ENCODE measurements at regions of chr22 and their contacts with region 1.

Region 1: GRCh38 chr22:36286471-36287224 is 33.7 kb downstream of the APOL1 start:
- DNase-seq: peak; percentile 94
- H3K4me3 ChIP-seq: no peak overlapping the region
- H3K27ac ChIP-seq: peak overlapping the region in 1 of 2 experiments; percentile 29; a peak in 2 of 4 replicates
- H3K4me1 ChIP-seq: no peaks in the 10 kb centered on the region; a peak in 1 of 4 replicates
- H3K27me3 ChIP-seq: no peaks in the 10 kb centered on the region
- CTCF ChIP-seq: peak; percentile 90
- EP300 ChIP-seq: no peak
- RAD21 ChIP-seq: peak; percentile 82

Region 2: DNA sequence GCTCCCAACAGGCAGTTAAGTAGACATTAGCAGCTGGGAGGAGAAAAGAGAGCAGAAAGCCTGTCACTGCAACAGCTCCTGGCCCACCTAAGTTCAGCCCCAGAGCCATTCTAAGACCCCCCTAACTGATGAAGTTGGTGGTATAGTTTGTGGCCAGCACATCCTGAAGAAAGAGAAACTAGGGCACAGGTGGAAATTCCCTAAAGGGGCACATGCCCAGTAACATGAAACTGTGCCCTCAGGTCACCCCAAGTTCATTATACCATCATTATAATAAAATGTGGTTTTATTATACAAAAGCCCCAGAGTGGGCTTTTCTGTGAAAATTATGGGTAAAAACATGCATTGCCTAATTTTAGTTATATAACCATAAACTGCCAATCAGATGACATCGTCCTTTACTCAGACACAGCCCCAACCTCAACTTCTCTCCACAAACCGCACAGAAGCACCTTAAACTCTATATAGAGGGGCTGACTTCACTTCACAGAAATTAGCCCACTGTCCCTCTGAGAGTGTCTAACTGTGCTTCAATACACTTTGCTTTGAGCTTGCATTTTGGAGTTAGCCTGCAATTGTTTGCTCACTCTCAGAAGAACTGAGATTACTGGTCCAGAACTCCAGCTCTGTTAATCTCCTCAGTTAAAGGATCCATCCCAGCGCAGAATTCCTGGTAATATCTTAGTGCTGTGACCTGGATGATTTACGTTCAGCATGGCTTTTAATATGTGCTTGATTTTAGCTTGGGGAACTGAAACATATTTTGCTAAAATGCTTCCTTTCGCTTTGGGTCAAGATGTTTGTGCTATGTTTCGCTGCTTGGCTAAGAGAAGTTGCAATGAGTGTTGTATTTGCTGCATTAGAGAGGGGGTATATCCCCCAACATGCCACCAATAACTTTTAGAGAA is 124.3 kb before region 1 on chr22:
- CTCF ChIA-PET with region 1: interaction called, 17 read pairs
- POLR2A ChIA-PET with region 1: no interaction called
- DNase-seq: no peak
- H3K4me3 ChIP-seq: no peak overlapping the region
- H3K27ac ChIP-seq: no peak overlapping the region
- H3K4me1 ChIP-seq: no peaks in the 10 kb centered on the region; a peak in 1 of 4 replicates
- H3K27me3 ChIP-seq: no peaks in the 10 kb centered on the region; the same call in 1 of the 2 replicates
- CTCF ChIP-seq: no peak
- EP300 ChIP-seq: no peak
- RAD21 ChIP-seq: no peak

Region 3: DNA sequence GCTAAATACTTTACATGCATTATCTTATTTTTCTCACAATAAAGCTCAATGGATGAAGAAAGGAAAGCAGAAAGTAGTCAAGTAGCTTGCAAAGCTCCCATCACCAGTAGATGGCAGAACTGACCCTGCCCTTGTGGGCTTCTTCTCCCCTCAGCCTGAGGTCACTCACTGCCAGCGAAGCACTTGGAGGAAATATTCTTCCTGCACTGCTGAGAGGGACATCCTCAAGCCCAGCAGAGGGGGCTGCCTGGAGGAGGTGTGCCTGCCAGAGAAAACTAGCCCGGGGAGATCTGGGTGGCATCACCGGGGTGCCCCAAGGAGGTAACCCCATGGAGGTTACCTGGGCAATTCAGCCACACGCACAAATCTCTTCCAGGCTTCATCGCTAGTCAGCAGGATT is 91.7 kb before region 1 on chr22:
- CTCF ChIA-PET with region 1: interaction called, 22 read pairs
- POLR2A ChIA-PET with region 1: no interaction called
- DNase-seq: peak; percentile 57
- H3K4me3 ChIP-seq: no peak overlapping the region
- H3K27ac ChIP-seq: no peak overlapping the region; a peak in 1 of 4 replicates
- H3K4me1 ChIP-seq: peaks cover 10 to 40% of the 10 kb centered on the region in 2 experiments; a peak in 2 of 4 replicates
- H3K27me3 ChIP-seq: no peaks in the 10 kb centered on the region; the same call in 1 of the 2 replicates
- CTCF ChIP-seq: peak; percentile 78
- EP300 ChIP-seq: no peak
- RAD21 ChIP-seq: peak; percentile 85

Region 4: GRCh38 chr22:36239401-36240171 is 47.1 kb before region 1 on chr22 and contains the start of gene APOL2:
- CTCF ChIA-PET with region 1: interaction called, 27 read pairs
- POLR2A ChIA-PET with region 1: no interaction called
- DNase-seq: peak; percentile 85
- H3K4me3 ChIP-seq: peak within 1 kb of the TSS; percentile 61 to 79
- H3K27ac ChIP-seq: peak within 1 kb of the TSS; percentile 79 to 91
- H3K4me1 ChIP-seq: peaks cover 10 to 25% of the 10 kb centered on the region in 2 experiments; a peak in 1 of 4 replicates
- H3K27me3 ChIP-seq: no peaks in the 10 kb centered on the region
- CTCF ChIP-seq: peak; percentile 65
- EP300 ChIP-seq: no peak
- RAD21 ChIP-seq: peak; percentile 66
- polyA plus RNA-seq, gene APOL2: 8.3 and 9.4 TPM in 2 replicates

Region 5: GRCh38 chr22:36546932-36547331 is 260.3 kb after region 1 on chr22:
- CTCF ChIA-PET with region 1: no interaction called
- POLR2A ChIA-PET with region 1: no interaction called
- DNase-seq: no peak
- H3K4me3 ChIP-seq: no peak overlapping the region
- H3K27ac ChIP-seq: no peak overlapping the region
- H3K4me1 ChIP-seq: peaks cover 0 to 2% of the 10 kb centered on the region in 2 experiments; a peak in 1 of 4 replicates
- H3K27me3 ChIP-seq: peaks cover 15% of the 10 kb centered on the region
- CTCF ChIP-seq: no peak
- EP300 ChIP-seq: no peak
- RAD21 ChIP-seq: no peak